ENCODE measurements at regions of chr16 and their contacts with region 1.

Region 1: DNA sequence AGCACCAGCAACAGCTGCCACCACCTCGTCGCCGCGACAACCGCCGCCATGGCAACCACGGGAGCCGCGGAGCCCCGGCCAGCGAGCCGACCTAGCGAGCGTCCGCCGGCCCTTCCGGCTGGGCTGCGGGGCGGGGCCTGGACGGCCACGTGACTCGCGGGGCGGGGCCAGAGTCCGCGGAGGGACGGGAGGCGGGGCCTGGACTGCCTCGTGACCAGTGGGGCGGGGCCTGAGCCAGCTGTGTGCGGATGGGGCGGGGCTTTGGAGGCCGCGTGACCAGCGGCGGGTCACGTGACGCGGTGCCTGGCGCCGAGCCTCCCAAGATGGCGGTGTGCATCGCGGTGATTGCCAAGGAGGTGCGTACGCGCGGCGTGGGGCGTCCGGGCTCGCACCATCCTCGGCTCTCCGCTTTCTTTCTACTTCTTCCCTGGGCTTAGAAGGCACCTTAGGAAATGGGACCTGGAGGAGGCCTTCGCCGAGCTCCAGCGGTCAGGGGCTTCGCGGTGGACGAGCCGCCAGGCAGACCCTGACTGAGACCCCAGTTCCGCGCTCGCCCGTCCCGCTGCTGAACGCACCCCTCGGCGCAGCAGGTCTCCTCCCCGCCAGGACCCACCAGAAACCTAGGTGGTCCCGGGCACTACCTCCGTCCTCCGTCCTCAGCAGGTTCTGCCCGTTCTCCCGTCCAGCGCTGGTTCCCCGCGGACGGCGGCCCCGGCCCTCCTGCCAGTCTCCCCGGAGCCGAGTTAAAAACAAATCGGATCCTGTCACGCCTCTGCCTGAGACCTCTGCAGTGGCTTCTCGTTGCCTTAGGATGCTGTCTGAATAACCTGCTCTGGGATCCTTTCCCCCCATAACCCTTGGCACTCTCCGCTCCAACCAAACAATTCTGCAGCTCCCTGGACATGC is at the starts of genes GALNS and TRAPPC2L:
- DNase-seq: peak; percentile 100
- H3K4me3 Mint-ChIP-seq: peak within 1 kb of the TSS; percentile 99
- H3K27ac Mint-ChIP-seq: peak within 1 kb of the TSS; percentile 94
- H3K4me1 Mint-ChIP-seq: peaks cover 19% of the 10 kb centered on the region
- H3K27me3 Mint-ChIP-seq: no peaks in the 10 kb centered on the region
- total RNA-seq, gene GALNS: 23.2 and 23.4 TPM in 2 replicates
- total RNA-seq, gene TRAPPC2L: 62.1 and 67.1 TPM in 2 replicates

Region 2: DNA sequence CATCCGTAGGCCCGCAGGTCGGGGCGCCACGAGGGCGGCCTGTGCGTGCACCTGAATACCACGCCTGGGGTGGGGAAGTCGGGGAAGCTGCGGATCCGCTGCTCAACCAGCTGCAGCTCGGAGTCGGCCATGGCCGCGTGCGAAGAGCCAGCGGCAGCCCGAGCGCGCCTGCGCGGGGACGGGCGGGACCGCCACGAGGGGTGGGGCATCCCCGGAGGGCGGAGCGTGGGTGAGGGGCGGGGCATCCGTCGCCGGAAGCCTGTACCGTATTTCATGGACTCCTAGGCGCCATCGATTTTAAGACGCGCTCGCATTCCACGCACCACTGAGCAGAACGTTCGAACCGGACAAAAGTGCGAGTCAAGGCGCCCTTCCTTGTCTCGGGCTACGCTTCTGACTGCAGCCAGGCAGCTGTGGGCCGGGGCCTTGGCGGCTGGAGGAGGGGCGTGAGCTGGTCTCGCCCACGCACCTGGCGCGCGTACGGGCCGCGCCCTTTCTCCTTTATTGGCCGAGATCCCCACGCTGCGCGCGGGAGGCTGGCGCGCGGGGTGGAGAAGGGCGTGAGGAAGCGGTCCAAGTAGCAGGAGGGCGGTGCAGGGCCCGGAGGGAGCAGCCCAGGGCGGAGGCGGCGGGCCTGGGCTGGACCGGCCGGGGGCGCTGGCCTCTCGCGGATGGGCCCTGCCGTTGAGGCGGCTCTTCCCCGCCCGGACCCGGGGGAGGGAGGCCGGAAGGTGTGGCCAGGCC is 45.1 kb before region 1 on chr16 and contains the start of gene APRT:
- intact Hi-C with region 1: loop called (anchors 1 kb)
- DNase-seq: peak; percentile 99
- H3K4me3 Mint-ChIP-seq: peak within 1 kb of the TSS; percentile 89
- H3K27ac Mint-ChIP-seq: peak within 1 kb of the TSS; percentile 95
- H3K4me1 Mint-ChIP-seq: peaks cover 15% of the 10 kb centered on the region
- H3K27me3 Mint-ChIP-seq: no peaks in the 10 kb centered on the region
- total RNA-seq, gene APRT: 312 and 314 TPM in 2 replicates

Region 3: DNA sequence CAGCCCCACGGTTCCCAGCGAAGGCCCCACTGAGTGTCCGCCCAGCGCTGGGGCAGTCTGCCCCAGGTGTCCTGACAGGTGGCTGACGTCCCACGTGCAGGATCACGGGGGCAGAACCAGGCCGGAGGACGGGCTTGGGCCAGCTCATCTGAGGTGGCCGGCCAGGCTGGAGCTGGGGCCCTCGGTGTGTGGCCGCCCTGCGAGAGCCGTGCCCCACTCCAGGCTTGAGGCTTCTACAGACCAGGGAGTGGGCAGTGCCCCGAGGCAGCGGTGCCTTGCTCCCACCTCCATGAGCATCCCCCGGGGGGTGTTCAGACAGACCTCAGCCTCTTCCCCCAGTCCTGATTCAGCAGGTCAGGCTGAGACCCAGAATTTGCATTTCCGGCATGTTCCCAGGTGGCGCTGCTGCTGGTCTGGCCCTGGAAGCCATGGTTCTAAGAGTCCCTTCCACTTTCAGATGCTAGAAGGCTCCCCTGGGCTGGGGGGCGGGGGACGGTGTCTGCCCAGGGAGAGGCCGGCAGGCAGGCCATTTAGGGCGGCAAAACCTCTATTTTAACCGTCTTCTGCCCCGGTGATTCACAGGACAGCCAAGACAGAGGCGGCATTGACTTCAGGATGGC is 44.7 kb after region 1 on chr16:
- intact Hi-C with region 1: no loop called
- DNase-seq: no peak
- H3K4me3 Mint-ChIP-seq: no peak overlapping the region
- H3K27ac Mint-ChIP-seq: no peak overlapping the region
- H3K4me1 Mint-ChIP-seq: no peaks in the 10 kb centered on the region
- H3K27me3 Mint-ChIP-seq: no peaks in the 10 kb centered on the region